ENCODE measurements at regions of chr11 and their contacts with region 1.

Region 1: GRCh38 chr11:74354036-74354435 is 42.6 kb upstream of the P4HA3 start:
- DNase-seq: no peak
- H3K4me3 ChIP-seq: no peak overlapping the region
- H3K27ac ChIP-seq: no peak overlapping the region
- H3K27me3 ChIP-seq: no peaks in the 10 kb centered on the region
- CTCF ChIP-seq: no peak

Region 2: GRCh38 chr11:74297484-74297883 is 56.6 kb before region 1 on chr11:
- CTCF ChIA-PET with region 1: interaction called, 10 read pairs
- POLR2A ChIA-PET with region 1: no interaction called
- DNase-seq: no peak
- H3K4me3 ChIP-seq: no peak overlapping the region
- H3K27ac ChIP-seq: no peak overlapping the region
- H3K27me3 ChIP-seq: no peaks in the 10 kb centered on the region
- CTCF ChIP-seq: no peak